Common myeloid progenitor, CD34-positive (primary cell): ENCODE measurements at regions of chr11 and their contacts with region 1.

Region 1: DNA sequence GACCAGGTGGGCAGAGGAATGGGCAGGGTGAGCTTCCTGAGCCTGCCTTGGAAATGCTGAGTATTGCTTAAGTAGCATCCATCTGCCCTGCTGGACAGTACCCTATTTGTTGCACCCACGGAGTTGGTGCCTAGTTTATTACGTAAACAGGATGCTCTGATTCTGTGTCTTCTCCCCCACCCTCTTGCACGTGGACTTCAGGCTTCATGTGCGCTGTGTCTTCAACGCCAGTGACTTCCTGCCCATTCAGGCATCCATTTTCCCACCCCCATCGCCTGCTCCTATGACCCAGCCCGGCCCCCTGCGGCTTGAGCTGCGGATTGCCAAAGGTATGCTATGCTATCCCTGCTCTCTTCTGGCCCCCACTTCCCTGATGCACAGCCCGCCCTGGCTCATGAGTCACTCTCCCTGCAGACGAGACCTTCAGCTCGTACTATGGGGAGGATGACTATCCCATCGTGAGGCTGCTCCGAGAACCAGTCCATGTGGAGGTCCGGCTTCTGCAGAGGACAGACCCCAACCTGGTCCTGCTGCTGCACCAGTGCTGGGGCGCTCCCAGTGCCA is 5.7 kb downstream of the ZP1 start:
- DNase-seq: no peak
- H3K4me3 ChIP-seq: no peak overlapping the region
- H3K27ac ChIP-seq: no peak overlapping the region
- H3K4me1 ChIP-seq: peaks cover 1 to 21% (median 14%) of the 10 kb centered on the region in 4 experiments
- H3K27me3 ChIP-seq: no peaks in the 10 kb centered on the region

Region 2: DNA sequence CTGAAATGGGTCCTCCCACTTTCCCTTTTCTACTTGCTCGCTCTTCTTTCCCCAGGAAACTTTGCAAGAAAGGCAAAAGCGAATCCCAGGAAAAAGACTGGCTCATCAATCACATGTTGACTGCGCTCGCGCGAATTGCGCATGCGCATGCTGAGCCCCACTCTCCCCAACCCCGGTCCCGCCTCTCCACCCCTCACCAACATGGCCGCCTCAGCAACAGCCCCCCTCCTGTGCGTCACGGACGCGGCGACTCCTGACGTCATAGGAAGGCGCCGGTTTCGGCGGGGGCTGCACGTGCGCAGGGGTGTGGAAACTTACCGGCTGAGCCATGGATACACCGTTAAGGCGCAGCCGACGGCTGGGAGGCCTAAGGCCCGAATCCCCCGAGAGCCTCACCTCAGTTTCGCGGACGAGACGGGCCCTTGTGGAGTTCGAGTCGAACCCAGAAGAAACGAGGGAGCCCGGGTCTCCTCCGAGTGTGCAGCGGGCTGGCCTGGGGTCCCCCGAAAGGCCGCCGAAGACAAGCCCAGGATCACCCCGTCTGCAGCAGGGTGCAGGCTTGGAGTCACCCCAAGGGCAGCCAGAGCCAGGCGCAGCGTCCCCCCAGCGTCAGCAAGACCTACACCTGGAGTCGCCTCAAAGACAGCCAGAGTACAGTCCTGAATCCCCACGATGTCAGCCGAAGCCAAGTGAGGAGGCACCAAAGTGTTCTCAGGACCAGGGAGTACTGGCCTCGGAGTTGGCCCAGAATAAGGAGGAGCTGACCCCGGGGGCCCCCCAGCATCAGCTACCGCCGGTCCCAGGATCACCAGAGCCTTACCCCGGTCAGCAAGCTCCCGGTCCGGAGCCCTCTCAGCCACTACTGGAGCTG is 31.0 kb before region 1 on chr11 and contains the start of gene CCDC86:
- CTCF ChIA-PET with region 1: interaction called, 128 read pairs
- POLR2A ChIA-PET with region 1: no interaction called
- DNase-seq: peak; percentile 96 to 97 (median 96)
- H3K4me3 ChIP-seq: peak within 1 kb of the TSS; percentile 73 to 97 (median 87)
- H3K27ac ChIP-seq: peak within 1 kb of the TSS; percentile 44 to 74
- H3K4me1 ChIP-seq: peaks cover 15 to 41% (median 31%) of the 10 kb centered on the region in 4 experiments
- H3K27me3 ChIP-seq: no peaks in the 10 kb centered on the region

Region 3: GRCh38 chr11:60855726-60856633 is 17.1 kb before region 1 on chr11 and contains the start of gene PTGDR2:
- CTCF ChIA-PET with region 1: interaction called, 12 read pairs
- POLR2A ChIA-PET with region 1: interaction called, 3 read pairs
- DNase-seq: peak in 2 of 3 donors; percentile 50 to 57
- H3K4me3 ChIP-seq: peak within 1 kb of the TSS in 5 of 7 experiments; percentile 17 to 44 (median 38)
- H3K27ac ChIP-seq: peak within 1 kb of the TSS in 1 of 2 experiments; percentile 43
- H3K4me1 ChIP-seq: peaks cover 8 to 56% (median 51%) of the 10 kb centered on the region in 4 experiments
- H3K27me3 ChIP-seq: no peaks in the 10 kb centered on the region

Region 4: GRCh38 chr11:60899046-60899936 is 26.2 kb after region 1 on chr11:
- CTCF ChIA-PET with region 1: interaction called, 10 read pairs
- POLR2A ChIA-PET with region 1: no interaction called
- DNase-seq: peak; percentile 80 to 94 (median 94)
- H3K4me3 ChIP-seq: no peak overlapping the region
- H3K27ac ChIP-seq: peak overlapping the region; percentile 25 to 62
- H3K4me1 ChIP-seq: peaks cover 0 to 8% (median 4%) of the 10 kb centered on the region in 4 experiments
- H3K27me3 ChIP-seq: no peaks in the 10 kb centered on the region

Region 5: GRCh38 chr11:60915248-60915914 is 42.3 kb after region 1 on chr11:
- CTCF ChIA-PET with region 1: no interaction called
- POLR2A ChIA-PET with region 1: no interaction called
- DNase-seq: peak; percentile 72 to 89 (median 85)
- H3K4me3 ChIP-seq: peak overlapping the region in 6 of 7 experiments; percentile 80 to 98 (median 92)
- H3K27ac ChIP-seq: no peak overlapping the region
- H3K4me1 ChIP-seq: peaks cover 23 to 53% (median 46%) of the 10 kb centered on the region in 4 experiments
- H3K27me3 ChIP-seq: no peaks in the 10 kb centered on the region